Activated T-helper 1 cell treated with anti-CD3 and anti-CD28 coated beads, Interleukin-12 subunit alpha, Interleukin-12 subunit beta, Interleukin-2, Interleukin-4 antibody, amounts not matched to agents 30 ng/mL and 10 ng/mL and 1 ng/mL, durations not matched to agents 14 hours and 24 hours and 36 hours (primary cell): ENCODE measurements at regions of chr15 and their contacts with region 1.

Region 1: DNA sequence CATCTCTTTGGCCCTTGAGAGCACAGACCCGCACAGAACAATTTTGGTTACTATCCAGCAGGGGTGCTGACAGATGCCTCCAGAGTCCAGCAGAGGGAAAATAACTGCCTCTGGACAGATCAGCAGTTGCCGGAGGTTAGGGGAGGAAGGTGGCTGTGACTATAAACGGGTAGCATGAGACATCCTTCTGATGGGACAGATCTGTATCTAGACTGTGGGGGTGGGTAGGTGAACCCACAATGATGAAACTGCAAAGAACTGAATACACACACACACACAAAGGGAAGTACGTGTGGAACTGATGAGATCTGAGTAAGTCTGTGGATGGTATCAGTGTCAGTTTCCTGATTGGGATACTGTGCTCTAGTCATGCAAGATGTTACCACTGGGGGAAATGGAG is 21.2 kb downstream of the ADAMTS7 start:
- DNase-seq: no peak
- H3K4me3 Mint-ChIP-seq: peak overlapping the region; percentile 28
- H3K27ac Mint-ChIP-seq: peak overlapping the region; percentile 31
- H3K4me1 Mint-ChIP-seq: peaks cover 10% of the 10 kb centered on the region
- H3K27me3 Mint-ChIP-seq: peaks cover 3% of the 10 kb centered on the region

Region 2: DNA sequence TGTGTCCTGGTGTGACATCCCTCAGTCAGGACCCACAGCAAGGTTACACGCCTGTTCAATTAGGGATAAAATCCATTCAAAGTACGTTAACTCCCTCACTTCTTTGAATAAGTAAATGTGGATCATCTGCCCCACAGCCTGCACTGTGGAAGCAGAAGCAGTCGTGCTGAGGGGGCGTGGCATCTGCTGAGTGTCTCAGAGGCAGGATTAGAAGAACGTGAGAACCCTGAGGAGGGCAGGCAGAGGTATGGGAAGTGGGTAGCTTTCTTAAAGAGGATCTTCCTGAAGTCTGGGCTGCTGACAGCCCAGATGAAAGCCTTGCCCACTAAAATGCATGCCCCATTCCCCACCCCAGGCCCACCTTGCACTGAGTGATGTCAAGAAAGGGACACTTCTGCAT is 421.4 kb before region 1 on chr15:
- intact Hi-C with region 1: no loop called
- DNase-seq: no peak
- H3K4me3 Mint-ChIP-seq: no peak overlapping the region
- H3K27ac Mint-ChIP-seq: no peak overlapping the region
- H3K4me1 Mint-ChIP-seq: no peaks in the 10 kb centered on the region
- H3K27me3 Mint-ChIP-seq: peaks cover 13% of the 10 kb centered on the region

Region 3: GRCh38 chr15:78761891-78762385 is 28.1 kb before region 1 on chr15:
- intact Hi-C with region 1: loop called (anchors 1 kb)
- DNase-seq: no peak
- H3K4me3 Mint-ChIP-seq: no peak overlapping the region
- H3K27ac Mint-ChIP-seq: peak overlapping the region; percentile 89
- H3K4me1 Mint-ChIP-seq: peaks cover 17% of the 10 kb centered on the region
- H3K27me3 Mint-ChIP-seq: no peaks in the 10 kb centered on the region

Region 4: DNA sequence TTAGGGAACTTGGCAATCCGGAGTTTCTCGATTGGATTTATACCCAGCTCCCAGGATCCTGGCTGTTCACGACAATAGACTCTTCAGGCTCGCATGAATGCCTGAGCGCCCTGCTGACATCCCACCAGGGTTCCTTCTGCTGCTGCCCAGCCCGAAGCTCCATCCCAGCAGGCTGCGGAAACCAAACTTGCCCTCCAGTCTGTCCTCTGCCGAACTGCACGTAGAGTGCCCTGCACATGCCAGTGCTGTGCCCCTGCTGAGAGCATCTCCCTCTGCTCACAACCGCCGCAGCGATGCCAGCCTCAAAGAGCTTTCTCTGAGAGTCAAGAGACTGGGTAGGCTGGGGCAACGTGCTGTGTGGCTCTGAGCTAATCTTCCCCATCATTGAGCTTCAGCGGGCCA is 14.4 kb after region 1 on chr15:
- intact Hi-C with region 1: no loop called
- DNase-seq: no peak
- H3K4me3 Mint-ChIP-seq: no peak overlapping the region
- H3K27ac Mint-ChIP-seq: no peak overlapping the region
- H3K4me1 Mint-ChIP-seq: no peaks in the 10 kb centered on the region
- H3K27me3 Mint-ChIP-seq: peaks cover 12% of the 10 kb centered on the region